Activated CD4-positive, alpha-beta memory T cell treated with anti-CD3 and anti-CD28 coated beads, Interleukin-2, amount 10 ng/mL, durations not matched to agents 7 days and 5 days (primary cell): ENCODE measurements at regions of chr12 and their contacts with region 1.

Region 1: GRCh38 chr12:113152835-113153814 is 3.6 kb downstream of the CFAP73 start:
- DNase-seq: peak; percentile 50
- H3K4me3 Mint-ChIP-seq: peak overlapping the region; percentile 68
- H3K27ac Mint-ChIP-seq: no peak overlapping the region
- H3K4me1 Mint-ChIP-seq: peaks cover 18% of the 10 kb centered on the region
- H3K27me3 Mint-ChIP-seq: peaks cover 32% of the 10 kb centered on the region

Region 2: DNA sequence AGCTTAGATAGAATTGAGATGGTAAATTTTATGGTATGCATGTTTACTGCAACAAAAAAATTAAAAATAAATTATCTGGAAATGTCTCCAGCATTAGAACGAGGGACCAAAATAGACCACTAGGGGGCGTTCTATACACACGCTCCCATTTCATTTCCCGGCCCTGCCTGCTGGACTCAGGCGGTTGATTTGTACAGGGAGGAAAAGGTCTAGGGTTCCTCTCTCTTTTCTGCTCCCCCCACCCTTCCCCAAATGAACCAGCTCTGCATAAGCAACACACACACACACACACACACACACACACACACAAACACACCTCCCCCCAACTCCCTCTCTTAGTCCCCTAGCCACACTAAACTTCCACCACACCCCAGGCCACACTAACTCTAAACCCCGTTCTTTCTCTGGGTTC is 104.4 kb before region 1 on chr12:
- CTCF ChIA-PET with region 1: interaction called, 11 read pairs
- POLR2A ChIA-PET with region 1: no interaction called
- DNase-seq: peak; percentile 57
- H3K4me3 Mint-ChIP-seq: no peak overlapping the region
- H3K27ac Mint-ChIP-seq: no peak overlapping the region
- H3K4me1 Mint-ChIP-seq: no peaks in the 10 kb centered on the region
- H3K27me3 Mint-ChIP-seq: peaks cover 2% of the 10 kb centered on the region

Region 3: GRCh38 chr12:113135178-113136127 is 17.7 kb before region 1 on chr12 and contains the start of gene RASAL1:
- CTCF ChIA-PET with region 1: interaction called, 10 read pairs
- POLR2A ChIA-PET with region 1: interaction called, 4 read pairs
- DNase-seq: peak; percentile 66
- H3K4me3 Mint-ChIP-seq: peak within 1 kb of the TSS; percentile 54
- H3K27ac Mint-ChIP-seq: no peak within 1 kb of the TSS
- H3K4me1 Mint-ChIP-seq: peaks cover 14% of the 10 kb centered on the region
- H3K27me3 Mint-ChIP-seq: peaks cover 6% of the 10 kb centered on the region
- total RNA-seq, gene RASAL1: 0.10 to 0.35 TPM

Region 4: DNA sequence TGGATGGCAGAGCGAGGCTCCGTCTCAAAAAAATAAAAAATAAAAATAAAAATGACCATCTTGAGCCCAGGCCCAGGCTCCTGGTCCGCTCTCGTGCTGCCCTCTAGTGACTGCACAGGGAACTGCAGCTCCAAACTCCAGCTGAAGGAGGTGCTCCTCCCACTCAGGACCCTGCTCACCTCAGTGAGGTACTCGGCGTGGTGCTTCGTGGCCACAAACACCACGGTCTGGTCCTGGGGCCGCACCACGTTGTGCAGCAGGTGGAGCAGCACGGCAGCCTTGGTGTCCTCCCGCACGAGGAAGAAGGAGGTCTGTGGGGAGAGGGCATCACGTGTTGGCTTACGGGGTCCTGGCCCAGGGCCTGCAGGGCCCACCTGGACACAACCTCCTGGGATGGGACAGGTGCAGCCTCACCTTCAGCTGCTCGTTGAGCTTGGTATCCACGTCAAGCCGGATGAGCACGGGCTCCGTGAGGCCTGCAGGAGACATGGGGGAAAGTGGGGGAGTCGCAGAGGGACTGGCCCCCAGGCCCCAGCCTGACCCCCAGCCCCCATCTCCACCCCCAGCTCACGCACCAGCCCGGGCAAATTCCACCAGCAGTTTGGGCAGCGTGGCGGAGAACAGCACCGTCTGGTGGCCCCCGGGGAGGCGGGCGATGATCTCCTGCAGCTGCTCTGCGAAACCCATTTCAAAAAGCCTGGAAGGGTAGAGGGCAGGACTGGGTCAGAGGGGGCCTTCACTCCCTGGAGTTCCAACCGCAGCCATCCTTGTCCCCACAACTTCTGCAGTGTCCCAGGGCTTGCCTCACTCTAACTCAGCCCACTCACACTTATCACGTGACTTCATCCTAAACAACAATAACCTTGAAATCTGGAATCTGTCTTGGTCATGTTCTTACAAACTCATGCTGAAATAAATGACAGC is 21.6 kb after region 1 on chr12:
- CTCF ChIA-PET with region 1: interaction called, 38 read pairs
- POLR2A ChIA-PET with region 1: interaction called, 4 read pairs
- DNase-seq: peak; percentile 77
- H3K4me3 Mint-ChIP-seq: no peak overlapping the region
- H3K27ac Mint-ChIP-seq: no peak overlapping the region
- H3K4me1 Mint-ChIP-seq: peaks cover 2% of the 10 kb centered on the region
- H3K27me3 Mint-ChIP-seq: no peaks in the 10 kb centered on the region

Region 5: DNA sequence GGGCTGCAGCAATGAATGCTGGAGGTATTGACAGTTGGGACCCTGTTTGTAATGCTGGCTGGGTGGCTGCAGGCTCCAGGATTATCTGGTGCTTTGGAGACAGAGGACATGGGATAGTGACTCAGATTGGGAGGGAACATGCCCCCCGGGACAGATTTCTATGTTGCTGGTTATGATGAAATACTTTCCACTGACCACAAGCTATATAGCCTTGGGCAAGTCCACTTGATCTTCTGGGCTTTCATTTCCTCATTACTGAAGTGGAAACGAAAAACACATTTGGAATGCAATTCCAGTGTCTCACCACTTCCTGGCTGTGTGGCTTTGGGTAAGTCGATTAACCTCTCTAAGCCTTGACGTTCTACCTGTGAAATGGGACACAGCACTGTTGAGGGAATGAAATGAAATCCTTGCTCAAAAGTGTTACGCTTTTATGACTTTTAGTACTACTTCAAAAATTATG is 61.8 kb after region 1 on chr12:
- CTCF ChIA-PET with region 1: no interaction called
- POLR2A ChIA-PET with region 1: no interaction called
- DNase-seq: no peak
- H3K4me3 Mint-ChIP-seq: no peak overlapping the region
- H3K27ac Mint-ChIP-seq: peak overlapping the region; percentile 13
- H3K4me1 Mint-ChIP-seq: peaks cover 46% of the 10 kb centered on the region
- H3K27me3 Mint-ChIP-seq: no peaks in the 10 kb centered on the region